Activated naive CD4-positive, alpha-beta T cell treated with anti-CD3 and anti-CD28 coated beads, Interleukin-2, amount 10 ng/mL, durations not matched to agents 7 days and 5 days (primary cell): ENCODE measurements at regions of chr18 and their contacts with region 1.

Region 1: DNA sequence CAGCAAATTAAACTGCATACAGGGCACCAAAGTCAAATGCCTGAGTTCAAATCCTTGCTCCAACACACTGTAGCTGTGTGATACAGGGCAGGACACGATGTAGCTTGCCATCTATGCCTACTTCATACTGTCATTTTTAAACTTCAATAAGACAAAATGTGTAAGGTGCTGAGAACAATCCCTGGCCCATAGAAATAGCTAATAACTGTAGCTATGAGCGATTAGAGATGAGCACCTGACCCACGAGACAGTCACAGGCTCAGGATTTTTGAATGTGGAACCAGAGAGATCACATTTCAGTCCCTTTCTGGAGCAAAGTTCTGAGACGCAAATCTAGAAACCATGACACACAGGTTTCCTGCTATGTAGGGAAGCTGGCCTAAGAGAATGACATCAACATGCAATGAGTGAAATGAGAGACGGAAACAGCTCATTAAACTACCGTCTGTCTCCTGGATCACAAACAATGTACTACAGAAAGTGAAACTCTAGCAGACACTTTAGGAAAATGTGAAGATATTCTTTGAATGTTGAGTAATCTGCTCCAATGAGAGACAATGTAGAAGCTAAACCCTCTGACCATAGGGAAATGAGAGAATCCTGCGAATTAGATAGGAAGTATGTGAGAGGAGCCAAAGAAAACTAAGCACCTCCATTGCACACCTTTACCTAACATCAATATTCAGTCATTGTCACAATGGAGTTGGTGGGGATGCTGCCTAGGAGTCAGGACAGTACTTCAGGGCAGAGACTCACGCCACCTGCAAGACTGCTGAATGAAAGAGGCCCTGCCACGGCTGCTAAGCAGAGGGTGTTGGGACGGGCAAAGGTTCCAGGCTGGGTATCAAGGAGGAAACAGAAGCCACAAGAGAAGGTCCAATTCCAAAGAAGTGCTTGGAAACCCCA is 25.5 kb downstream of the B4GALT6 start:
- DNase-seq: no peak
- H3K4me3 Mint-ChIP-seq: no peak overlapping the region
- H3K27ac Mint-ChIP-seq: peak overlapping the region; percentile 70
- H3K4me1 Mint-ChIP-seq: peaks cover 18% of the 10 kb centered on the region
- H3K27me3 Mint-ChIP-seq: no peaks in the 10 kb centered on the region

Region 2: DNA sequence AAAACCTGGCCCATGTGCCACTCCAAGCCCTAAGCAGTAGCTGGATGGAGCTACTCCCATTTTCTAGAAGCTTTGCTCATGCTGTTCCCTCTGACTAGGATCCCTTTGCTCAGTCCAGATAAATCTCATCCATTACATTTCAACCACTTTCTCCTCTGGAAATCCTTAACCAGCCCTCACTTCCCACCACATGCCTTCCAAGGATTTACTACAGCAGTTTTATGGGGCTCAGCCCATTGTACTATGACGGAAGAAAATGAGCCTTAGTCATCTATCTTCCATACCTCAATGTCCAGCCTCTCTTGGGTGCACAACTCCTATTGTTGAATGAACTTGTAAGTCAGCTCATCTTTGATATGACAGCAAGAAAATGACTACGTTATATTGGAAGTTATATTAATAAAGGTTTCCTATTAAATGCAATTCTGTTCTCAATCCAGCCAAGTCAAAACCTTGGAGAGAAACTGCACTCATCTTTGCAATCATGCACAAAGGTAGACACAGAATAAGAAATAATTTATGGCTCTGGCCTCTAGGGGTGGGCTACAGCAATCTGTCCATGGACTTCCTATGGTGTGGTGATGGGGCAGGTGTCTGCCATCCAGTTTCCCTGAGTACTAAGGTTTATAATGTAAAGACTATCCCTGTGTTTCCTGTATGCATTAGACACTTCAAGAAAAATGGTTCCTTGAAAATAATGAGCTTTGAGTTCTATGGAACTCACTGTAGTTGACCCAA is 22.1 kb after region 1 on chr18:
- CTCF ChIA-PET with region 1: interaction called, 11 read pairs
- DNase-seq: no peak
- H3K4me3 Mint-ChIP-seq: no peak overlapping the region
- H3K27ac Mint-ChIP-seq: no peak overlapping the region
- H3K4me1 Mint-ChIP-seq: peaks cover 12% of the 10 kb centered on the region
- H3K27me3 Mint-ChIP-seq: peaks cover 53% of the 10 kb centered on the region